B cell (primary cell): ENCODE measurements at regions of chr15 and their contacts with region 1.

Region 1: DNA sequence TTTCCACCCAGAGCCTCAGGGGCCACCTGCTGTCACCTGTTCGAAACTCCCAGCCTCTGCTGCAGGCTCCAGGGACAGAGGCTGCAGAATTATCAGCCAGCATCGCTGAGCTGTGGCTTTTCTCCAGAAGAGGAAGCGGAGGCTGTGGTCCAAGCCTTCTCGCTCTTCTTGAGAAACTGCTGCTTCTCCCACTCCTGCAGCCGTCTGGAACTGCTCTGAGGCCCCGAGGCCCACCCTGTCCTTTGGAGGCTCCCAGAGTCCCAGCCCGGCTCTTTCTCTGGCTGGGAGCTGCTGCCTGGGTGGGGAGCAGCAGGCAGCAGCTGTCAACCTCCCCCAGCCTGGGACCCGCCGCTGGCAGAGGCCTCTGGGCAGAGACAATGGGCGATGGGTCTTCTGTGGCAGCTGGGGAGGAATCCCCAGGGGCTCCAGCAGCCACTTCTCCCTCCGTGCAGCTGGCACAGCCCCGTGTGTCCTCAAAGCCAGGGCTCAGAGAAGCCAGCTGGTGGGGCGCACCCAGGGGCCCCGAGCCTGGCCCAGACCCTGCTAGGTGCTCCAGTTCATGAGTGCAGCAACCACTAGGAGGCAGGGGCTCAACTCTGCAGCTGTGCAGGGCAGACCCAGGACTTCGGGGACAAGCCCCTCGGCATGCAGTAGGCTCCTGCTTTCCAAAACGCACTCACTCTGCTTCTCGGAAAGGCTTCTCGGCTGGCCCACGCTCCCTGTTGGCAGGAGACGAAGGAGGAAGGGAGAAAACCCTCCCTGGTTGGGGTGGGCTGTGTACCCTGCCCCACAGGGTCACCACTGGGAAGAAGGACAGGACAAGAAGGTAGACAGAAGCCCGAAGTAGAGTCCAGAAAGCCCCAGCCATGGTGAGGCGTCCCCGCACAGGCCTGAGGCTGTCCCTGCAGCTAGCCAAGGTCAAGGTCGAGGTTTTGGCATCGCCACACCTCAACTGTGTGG is 49.9 kb upstream of the FURIN start:
- DNase-seq: peak; percentile 85
- ATAC-seq: peak; percentile 97
- H3K4me3 ChIP-seq: peak overlapping the region in 4 of 5 experiments; percentile 2 to 25 (median 20)
- H3K4me3 Mint-ChIP-seq: peak overlapping the region; percentile 72
- H3K27ac ChIP-seq: no peak overlapping the region
- H3K27ac Mint-ChIP-seq: peak overlapping the region; percentile 66
- H3K4me1 ChIP-seq: peaks cover 18 to 32% of the 10 kb centered on the region in 2 donors
- H3K4me1 Mint-ChIP-seq: peaks cover 43% of the 10 kb centered on the region
- H3K27me3 ChIP-seq: no peaks in the 10 kb centered on the region
- H3K27me3 Mint-ChIP-seq: no peaks in the 10 kb centered on the region
- CTCF ChIP-seq: peak; percentile 71

Region 2: DNA sequence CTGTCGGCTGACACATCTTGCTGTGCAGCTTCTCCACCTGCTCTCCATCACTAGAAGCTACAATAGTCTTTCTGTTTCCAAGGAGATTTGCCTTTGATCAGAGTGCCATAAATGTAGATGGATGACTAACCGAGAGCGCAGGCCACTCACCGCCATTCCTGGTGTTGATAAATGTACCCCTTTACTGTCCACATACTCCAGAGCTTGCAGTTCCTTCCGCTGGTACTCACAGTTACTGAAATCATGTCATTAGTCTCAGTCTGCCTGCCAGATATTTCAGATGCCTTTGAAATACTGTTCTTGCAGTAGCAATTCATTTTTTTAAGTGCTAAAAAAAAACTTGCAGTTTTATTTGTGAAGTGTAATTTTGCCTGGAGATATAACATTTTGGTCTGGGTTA is 29.1 kb before region 1 on chr15:
- CTCF ChIA-PET with region 1: interaction called, 11 read pairs
- POLR2A ChIA-PET with region 1: no interaction called
- intact Hi-C with region 1: loop called (anchors 2 kb)
- DNase-seq: no peak
- ATAC-seq: no peak
- H3K4me3 ChIP-seq: no peak overlapping the region
- H3K4me3 Mint-ChIP-seq: no peak overlapping the region
- H3K27ac ChIP-seq: no peak overlapping the region
- H3K27ac Mint-ChIP-seq: no peak overlapping the region
- H3K4me1 ChIP-seq: peaks cover 0 to 18% of the 10 kb centered on the region in 2 donors
- H3K4me1 Mint-ChIP-seq: peaks cover 20% of the 10 kb centered on the region
- H3K27me3 ChIP-seq: no peaks in the 10 kb centered on the region
- H3K27me3 Mint-ChIP-seq: no peaks in the 10 kb centered on the region
- CTCF ChIP-seq: no peak

Region 3: GRCh38 chr15:90839187-90840071 is 20.9 kb after region 1 on chr15:
- CTCF ChIA-PET with region 1: interaction called, 12 read pairs
- POLR2A ChIA-PET with region 1: interaction called, 6 read pairs
- intact Hi-C with region 1: loop called (anchors 2 kb)
- DNase-seq: peak; percentile 74
- ATAC-seq: peak; percentile 54
- H3K4me3 ChIP-seq: peak overlapping the region in 3 of 5 experiments; percentile 52 to 74 (median 63)
- H3K4me3 Mint-ChIP-seq: peak overlapping the region; percentile 66
- H3K27ac ChIP-seq: peak overlapping the region in 1 of 2 donors; percentile 67
- H3K27ac Mint-ChIP-seq: peak overlapping the region; percentile 61
- H3K4me1 ChIP-seq: peaks cover 33 to 46% of the 10 kb centered on the region in 2 donors
- H3K4me1 Mint-ChIP-seq: peaks cover 38% of the 10 kb centered on the region
- H3K27me3 ChIP-seq: no peaks in the 10 kb centered on the region
- H3K27me3 Mint-ChIP-seq: no peaks in the 10 kb centered on the region
- CTCF ChIP-seq: no peak

Region 4: GRCh38 chr15:90845201-90845949 is 26.8 kb after region 1 on chr15:
- CTCF ChIA-PET with region 1: interaction called, 12 read pairs
- POLR2A ChIA-PET with region 1: interaction called, 5 read pairs
- intact Hi-C with region 1: no loop called
- DNase-seq: peak; percentile 60
- ATAC-seq: peak; percentile 93
- H3K4me3 ChIP-seq: no peak overlapping the region
- H3K4me3 Mint-ChIP-seq: peak overlapping the region; percentile 14
- H3K27ac ChIP-seq: no peak overlapping the region
- H3K27ac Mint-ChIP-seq: peak overlapping the region; percentile 79
- H3K4me1 ChIP-seq: peaks cover 14 to 20% of the 10 kb centered on the region in 2 donors
- H3K4me1 Mint-ChIP-seq: peaks cover 22% of the 10 kb centered on the region
- H3K27me3 ChIP-seq: no peaks in the 10 kb centered on the region
- H3K27me3 Mint-ChIP-seq: no peaks in the 10 kb centered on the region
- CTCF ChIP-seq: no peak

Region 5: DNA sequence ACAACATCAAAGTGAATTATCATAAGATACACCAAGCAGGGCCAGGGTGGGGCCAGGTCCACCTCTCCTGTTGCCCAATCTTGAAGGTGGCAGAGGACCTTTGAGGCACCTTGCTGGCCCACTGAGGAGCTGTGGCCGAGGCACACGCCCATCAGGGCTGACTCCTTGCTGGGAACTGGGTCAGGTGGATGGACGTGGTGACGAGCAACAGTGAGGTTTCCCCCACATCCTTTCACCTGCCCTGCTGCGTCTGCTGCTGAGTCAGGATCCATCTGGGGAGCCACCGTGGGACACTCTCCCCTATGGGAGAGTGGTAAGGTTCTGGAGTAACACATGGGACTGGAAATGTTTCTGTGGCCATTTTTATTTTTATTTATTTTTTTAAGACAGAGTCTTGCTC is 32.6 kb after region 1 on chr15:
- CTCF ChIA-PET with region 1: interaction called, 12 read pairs
- POLR2A ChIA-PET with region 1: interaction called, 5 read pairs
- intact Hi-C with region 1: loop called (anchors 1 kb)
- DNase-seq: no peak
- ATAC-seq: no peak
- H3K4me3 ChIP-seq: no peak overlapping the region
- H3K4me3 Mint-ChIP-seq: peak overlapping the region; percentile 66
- H3K27ac ChIP-seq: no peak overlapping the region
- H3K27ac Mint-ChIP-seq: peak overlapping the region; percentile 41
- H3K4me1 ChIP-seq: peaks cover 54 to 56% of the 10 kb centered on the region in 2 donors
- H3K4me1 Mint-ChIP-seq: peaks cover 54% of the 10 kb centered on the region
- H3K27me3 ChIP-seq: no peaks in the 10 kb centered on the region
- H3K27me3 Mint-ChIP-seq: no peaks in the 10 kb centered on the region
- CTCF ChIP-seq: no peak

Region 6: GRCh38 chr15:90869601-90870353 is 51.2 kb after region 1 on chr15:
- CTCF ChIA-PET with region 1: interaction called, 14 read pairs
- POLR2A ChIA-PET with region 1: interaction called, 10 read pairs
- intact Hi-C with region 1: loop called (anchors 1 kb)
- DNase-seq: peak; percentile 50
- ATAC-seq: peak; percentile 59
- H3K4me3 ChIP-seq: peak overlapping the region in 1 of 5 experiments; percentile 18
- H3K4me3 Mint-ChIP-seq: peak overlapping the region; percentile 92
- H3K27ac ChIP-seq: peak overlapping the region; percentile 19 to 32
- H3K27ac Mint-ChIP-seq: peak overlapping the region; percentile 95
- H3K4me1 ChIP-seq: peaks cover 31 to 39% of the 10 kb centered on the region in 2 donors
- H3K4me1 Mint-ChIP-seq: peaks cover 41% of the 10 kb centered on the region
- H3K27me3 ChIP-seq: no peaks in the 10 kb centered on the region
- H3K27me3 Mint-ChIP-seq: no peaks in the 10 kb centered on the region
- CTCF ChIP-seq: no peak